ENCODE measurements at regions of chr14 and their contacts with region 1.

Region 1: GRCh38 chr14:66196670-66197069 is 289.5 kb upstream of the CCDC196 start:
- DNase-seq: no peak
- ATAC-seq: no peak
- H3K4me3 ChIP-seq: no peak overlapping the region
- H3K27ac ChIP-seq: no peak overlapping the region
- H3K4me1 ChIP-seq: no peaks in the 10 kb centered on the region
- H3K27me3 ChIP-seq: no peaks in the 10 kb centered on the region
- CTCF ChIP-seq: no peak
- POLR2A ChIP-seq: no peak
- RAD21 ChIP-seq: no peak

Region 2: GRCh38 chr14:66240092-66240491 is 43.4 kb after region 1 on chr14:
- CTCF ChIA-PET with region 1: no interaction called
- POLR2A ChIA-PET with region 1: no interaction called
- dilution Hi-C with region 1: no loop called
- in situ Hi-C with region 1: no loop called
- intact Hi-C with region 1: loop called (anchors 1 kb)
- DNase-seq: no peak
- ATAC-seq: no peak
- H3K4me3 ChIP-seq: no peak overlapping the region
- H3K27ac ChIP-seq: no peak overlapping the region
- H3K4me1 ChIP-seq: no peaks in the 10 kb centered on the region
- H3K27me3 ChIP-seq: no peaks in the 10 kb centered on the region
- CTCF ChIP-seq: no peak
- POLR2A ChIP-seq: no peak
- RAD21 ChIP-seq: no peak

Region 3: GRCh38 chr14:66421990-66422946 is 225.6 kb after region 1 on chr14:
- CTCF ChIA-PET with region 1: no interaction called
- POLR2A ChIA-PET with region 1: no interaction called
- dilution Hi-C with region 1: no loop called
- in situ Hi-C with region 1: no loop called
- intact Hi-C with region 1: no loop called
- DNase-seq: no peak
- ATAC-seq: no peak
- H3K4me3 ChIP-seq: no peak overlapping the region
- H3K27ac ChIP-seq: no peak overlapping the region
- H3K4me1 ChIP-seq: no peaks in the 10 kb centered on the region
- H3K27me3 ChIP-seq: no peaks in the 10 kb centered on the region
- CTCF ChIP-seq: no peak
- POLR2A ChIP-seq: no peak
- RAD21 ChIP-seq: no peak